ENCODE measurements at regions of chr3 and their contacts with region 1.

Region 1: DNA sequence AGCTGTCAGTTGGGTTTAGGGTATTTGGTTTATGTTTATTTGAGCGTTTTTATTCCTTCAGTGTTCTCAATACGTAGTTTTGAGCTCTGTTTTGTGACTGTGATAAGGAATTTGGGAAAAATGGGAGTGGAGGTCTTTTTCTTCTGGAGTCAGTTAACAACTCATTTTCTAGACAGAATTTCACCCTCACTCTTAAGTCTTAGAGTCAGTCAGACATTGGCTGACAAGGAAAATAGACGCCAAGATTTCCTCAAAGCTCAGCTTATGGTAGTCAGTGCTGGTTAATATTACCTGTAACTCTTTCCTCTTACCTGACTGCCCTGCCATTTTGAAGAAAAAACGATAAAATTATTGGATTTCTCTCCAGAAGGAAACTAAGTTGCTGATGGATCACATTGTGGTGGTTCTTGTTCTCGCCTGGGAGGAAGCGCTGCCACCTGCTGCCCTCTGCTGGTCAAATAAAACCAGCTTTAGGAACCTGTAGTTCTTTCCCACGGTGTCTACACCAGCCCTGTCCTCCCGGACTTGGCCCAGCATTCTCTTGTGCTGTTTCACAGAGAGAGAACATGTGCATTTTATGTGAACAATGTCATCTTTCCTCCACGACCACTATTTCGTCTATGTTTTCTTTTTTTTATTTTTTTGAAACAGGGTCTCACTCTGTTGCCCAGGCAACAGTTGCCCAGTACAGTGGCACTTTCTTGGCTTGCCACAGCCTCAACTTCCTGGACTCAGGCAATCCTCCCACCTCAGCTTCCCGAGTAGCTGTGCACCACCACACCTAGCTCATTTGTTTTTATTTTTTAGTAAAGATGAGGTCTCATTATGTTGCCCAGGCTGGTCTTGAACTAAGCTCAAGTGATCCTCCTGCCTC is 41.4 kb upstream of the UMPS start:
- DNase-seq: peak; percentile 78
- H3K4me3 ChIP-seq: no peak overlapping the region; a peak in 1 of 4 replicates
- H3K27ac ChIP-seq: no peak overlapping the region
- H3K4me1 ChIP-seq: peaks cover 0 to 7% of the 10 kb centered on the region in 2 experiments; a peak in 1 of 4 replicates
- H3K27me3 ChIP-seq: no peaks in the 10 kb centered on the region
- CTCF ChIP-seq: peak; percentile 86
- EP300 ChIP-seq: no peak
- RAD21 ChIP-seq: peak; percentile 78

Region 2: DNA sequence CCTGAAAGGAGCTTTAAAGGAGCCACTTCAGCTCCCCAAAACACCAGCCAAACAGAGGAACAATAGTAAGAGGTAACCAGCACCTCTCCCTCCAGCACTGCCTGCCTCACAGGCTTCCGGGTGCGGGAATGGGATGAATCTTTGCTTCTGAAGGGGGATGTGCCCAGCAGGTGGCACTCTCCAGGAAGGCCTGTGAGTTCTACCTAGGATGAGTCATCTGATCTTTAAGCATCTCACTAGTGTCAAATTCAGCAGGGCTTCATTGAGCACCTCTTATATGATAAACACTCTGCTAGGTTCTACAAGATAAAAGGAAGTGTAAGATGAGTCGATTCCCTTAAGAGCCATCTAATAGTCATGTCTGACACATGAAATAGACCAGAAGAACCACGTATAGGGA is 196.0 kb before region 1 on chr3:
- CTCF ChIA-PET with region 1: no interaction called
- POLR2A ChIA-PET with region 1: no interaction called
- DNase-seq: peak; percentile 25
- H3K4me3 ChIP-seq: no peak overlapping the region
- H3K27ac ChIP-seq: no peak overlapping the region
- H3K4me1 ChIP-seq: no peaks in the 10 kb centered on the region
- H3K27me3 ChIP-seq: no peaks in the 10 kb centered on the region
- CTCF ChIP-seq: peak; percentile 62
- EP300 ChIP-seq: no peak
- RAD21 ChIP-seq: peak; percentile 31; the same call in 1 of the 2 replicates

Region 3: DNA sequence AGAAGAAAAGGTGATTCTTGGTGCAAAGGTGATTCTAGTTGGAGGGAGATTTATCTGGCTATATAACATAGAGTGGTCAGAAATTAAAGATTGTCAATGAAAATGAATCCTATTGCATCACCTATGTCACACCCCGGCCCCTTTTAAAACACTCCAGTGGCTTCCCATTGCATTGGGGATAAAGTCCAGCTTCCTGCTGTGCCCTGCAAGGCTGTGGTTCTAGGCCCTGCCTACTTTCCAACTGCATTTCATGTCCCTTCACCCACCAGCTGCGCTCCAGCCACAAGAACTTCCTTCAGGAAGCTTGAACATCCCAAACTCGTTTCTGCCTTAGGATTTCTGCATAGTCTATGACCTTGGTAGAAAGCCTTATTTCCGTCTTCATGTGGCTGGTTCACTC is 77.3 kb before region 1 on chr3:
- CTCF ChIA-PET with region 1: interaction called, 11 read pairs
- POLR2A ChIA-PET with region 1: no interaction called
- DNase-seq: no peak
- H3K4me3 ChIP-seq: no peak overlapping the region
- H3K27ac ChIP-seq: no peak overlapping the region
- H3K4me1 ChIP-seq: no peaks in the 10 kb centered on the region
- H3K27me3 ChIP-seq: no peaks in the 10 kb centered on the region
- CTCF ChIP-seq: no peak
- EP300 ChIP-seq: no peak
- RAD21 ChIP-seq: no peak

Region 4: DNA sequence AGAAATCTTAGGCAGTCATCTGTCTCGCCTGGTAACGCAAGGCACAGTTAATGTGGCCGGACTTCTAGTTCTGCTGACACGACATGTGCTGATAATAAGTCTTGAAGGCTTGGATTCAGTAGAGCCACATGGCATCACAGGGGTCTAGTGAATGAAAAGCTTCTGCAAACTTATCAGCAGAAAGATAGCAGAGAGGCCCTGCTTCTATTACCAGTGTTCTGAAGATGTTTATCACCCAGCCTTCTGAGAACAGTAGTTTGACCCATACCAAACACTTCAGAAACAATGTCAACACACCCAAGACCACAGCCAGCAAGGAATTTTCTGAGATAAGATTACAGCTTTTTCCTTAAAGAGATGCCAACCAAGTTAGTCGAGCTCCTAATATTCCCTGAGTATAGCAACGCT is 61.3 kb before region 1 on chr3:
- CTCF ChIA-PET with region 1: no interaction called
- POLR2A ChIA-PET with region 1: no interaction called
- DNase-seq: no peak
- H3K4me3 ChIP-seq: no peak overlapping the region
- H3K27ac ChIP-seq: no peak overlapping the region
- H3K4me1 ChIP-seq: peaks cover 0 to 3% of the 10 kb centered on the region in 2 experiments; a peak in 1 of 4 replicates
- H3K27me3 ChIP-seq: no peaks in the 10 kb centered on the region
- CTCF ChIP-seq: no peak
- EP300 ChIP-seq: no peak
- RAD21 ChIP-seq: no peak

Region 5: GRCh38 chr3:124676236-124676635 is 12.6 kb before region 1 on chr3:
- CTCF ChIA-PET with region 1: interaction called, 31 read pairs
- POLR2A ChIA-PET with region 1: no interaction called
- DNase-seq: no peak
- H3K4me3 ChIP-seq: no peak overlapping the region
- H3K27ac ChIP-seq: no peak overlapping the region
- H3K4me1 ChIP-seq: no peaks in the 10 kb centered on the region
- H3K27me3 ChIP-seq: no peaks in the 10 kb centered on the region
- CTCF ChIP-seq: no peak
- EP300 ChIP-seq: no peak
- RAD21 ChIP-seq: no peak

Region 6: GRCh38 chr3:124707656-124708062 is 18.8 kb after region 1 on chr3:
- CTCF ChIA-PET with region 1: interaction called, 11 read pairs
- POLR2A ChIA-PET with region 1: no interaction called
- DNase-seq: no peak
- H3K4me3 ChIP-seq: no peak overlapping the region
- H3K27ac ChIP-seq: peak overlapping the region in 1 of 2 experiments; percentile 78; a peak in 2 of 4 replicates
- H3K4me1 ChIP-seq: peaks cover 0 to 20% of the 10 kb centered on the region in 2 experiments; a peak in 1 of 4 replicates
- H3K27me3 ChIP-seq: no peaks in the 10 kb centered on the region
- CTCF ChIP-seq: no peak
- EP300 ChIP-seq: no peak
- RAD21 ChIP-seq: no peak

Region 7: DNA sequence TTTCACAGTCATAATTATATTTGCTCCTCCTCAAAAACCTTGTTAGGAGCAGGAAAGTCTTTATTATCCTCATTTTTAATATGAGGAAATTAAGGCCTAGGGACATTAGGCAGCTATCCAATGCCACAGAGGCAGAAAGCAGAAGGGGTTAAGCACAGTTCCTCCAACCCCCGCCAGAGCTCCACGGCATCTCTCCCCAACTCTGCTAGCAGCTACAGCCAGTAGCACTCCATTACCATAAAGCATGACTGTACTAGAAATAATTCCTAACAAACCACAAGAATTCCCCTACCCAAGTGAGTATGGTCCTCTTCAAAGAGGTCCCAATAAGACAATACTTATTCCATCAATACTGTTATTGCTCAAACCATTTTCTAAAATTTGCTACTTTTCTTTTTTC is 357.1 kb after region 1 on chr3:
- CTCF ChIA-PET with region 1: no interaction called
- POLR2A ChIA-PET with region 1: no interaction called
- DNase-seq: no peak
- H3K4me3 ChIP-seq: no peak overlapping the region
- H3K27ac ChIP-seq: no peak overlapping the region; a peak in 1 of 4 replicates
- H3K4me1 ChIP-seq: peaks cover 25 to 56% of the 10 kb centered on the region in 2 experiments; a peak in 3 of 4 replicates
- H3K27me3 ChIP-seq: no peaks in the 10 kb centered on the region
- CTCF ChIP-seq: peak; percentile 55
- EP300 ChIP-seq: no peak
- RAD21 ChIP-seq: no peak

Region 8: DNA sequence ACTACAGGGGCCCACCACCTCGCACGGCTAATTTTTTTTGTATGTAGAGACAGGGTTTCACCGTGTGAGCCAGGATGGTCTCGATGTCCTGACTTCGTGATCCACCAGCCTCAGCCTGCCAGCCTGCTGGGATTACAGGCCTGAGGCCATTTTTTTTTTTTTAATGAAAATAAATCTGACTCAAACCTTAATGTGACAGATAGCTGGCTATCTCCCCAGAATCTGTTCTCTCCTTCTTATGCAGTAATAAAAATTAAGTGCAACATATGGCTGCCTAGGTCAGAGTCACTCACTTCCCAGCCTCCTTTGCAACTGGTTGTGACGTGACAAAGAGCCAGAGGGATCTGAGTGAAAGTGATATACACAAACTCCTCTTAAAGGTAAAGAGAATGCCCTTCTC is 633.3 kb after region 1 on chr3:
- CTCF ChIA-PET with region 1: no interaction called
- POLR2A ChIA-PET with region 1: no interaction called
- DNase-seq: peak; percentile 66
- H3K4me3 ChIP-seq: no peak overlapping the region
- H3K27ac ChIP-seq: peak overlapping the region; percentile 75 to 79
- H3K4me1 ChIP-seq: peaks cover 18 to 34% of the 10 kb centered on the region in 2 experiments; a peak in 3 of 4 replicates
- H3K27me3 ChIP-seq: no peaks in the 10 kb centered on the region
- CTCF ChIP-seq: no peak
- EP300 ChIP-seq: peak; percentile 74 to 86
- RAD21 ChIP-seq: no peak

Measured in SK-N-SH (cell line).